WTC11 (cell line): ENCODE measurements at regions of chr2 and their contacts with region 1.

Region 1: DNA sequence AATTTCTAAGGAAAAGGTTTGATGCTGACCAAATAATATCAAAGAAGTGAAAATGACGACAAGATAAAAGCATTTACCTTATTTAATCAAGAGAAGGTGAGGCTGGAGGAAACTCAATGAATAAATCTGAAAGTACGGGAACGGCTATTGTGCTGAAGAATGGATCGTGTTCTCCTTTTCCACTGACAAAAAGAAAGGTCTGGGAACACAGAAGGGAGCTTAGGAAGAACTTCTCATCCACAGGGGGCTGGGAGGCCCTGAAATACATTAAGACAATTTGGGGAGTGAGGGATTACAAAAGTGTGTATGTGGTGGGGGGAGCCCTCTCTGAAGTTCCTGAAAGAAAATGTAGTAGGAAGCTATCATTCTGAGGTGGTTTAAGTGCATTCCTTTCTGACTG is 582.3 kb downstream of the SLC4A3 start:
- DNase-seq: no peak
- ATAC-seq: no peak
- H3K4me3 Mint-ChIP-seq: no peak overlapping the region
- H3K27ac Mint-ChIP-seq: no peak overlapping the region
- H3K4me1 Mint-ChIP-seq: peaks cover 43% of the 10 kb centered on the region
- H3K27me3 Mint-ChIP-seq: no peaks in the 10 kb centered on the region
- CTCF ChIP-seq: no peak

Region 2: DNA sequence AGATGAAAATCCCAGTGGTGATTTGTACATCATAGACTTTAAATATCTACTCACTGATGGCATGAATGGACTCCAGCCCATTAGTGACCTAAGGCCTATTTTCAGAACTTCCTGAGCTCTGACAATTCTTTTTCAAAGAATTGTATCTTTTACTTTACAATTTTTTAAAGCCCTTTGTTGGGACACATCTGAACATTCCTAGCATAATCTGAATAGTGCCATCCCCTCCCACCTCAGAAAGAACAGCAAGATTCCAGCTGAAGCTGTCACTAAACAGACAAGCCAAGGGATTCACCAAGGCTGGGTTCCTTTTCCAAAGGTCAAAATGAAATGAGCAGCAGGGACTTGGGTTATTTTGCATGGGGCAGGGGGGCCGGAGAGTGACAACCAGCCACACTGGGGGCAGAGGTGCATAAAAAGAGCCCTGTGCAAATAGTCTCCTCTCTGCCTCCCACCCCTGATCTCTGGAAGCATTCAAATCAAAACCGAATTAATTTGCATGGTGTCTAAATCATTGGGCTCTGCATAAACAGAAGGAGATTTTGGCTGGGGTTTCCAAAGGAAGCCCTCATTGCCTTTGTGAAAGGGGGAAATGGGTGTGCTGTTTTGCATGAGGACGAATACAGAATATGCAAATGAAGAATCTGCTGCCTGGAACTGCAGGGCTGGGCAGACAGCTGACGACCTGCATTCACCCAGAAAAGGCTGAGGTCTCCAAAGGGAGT is 1345.2 kb after region 1 on chr2:
- CTCF ChIA-PET with region 1: no interaction called
- POLR2A ChIA-PET with region 1: interaction called, 12 read pairs
- DNase-seq: peak; percentile 34
- ATAC-seq: peak; percentile 83
- H3K4me3 Mint-ChIP-seq: peak overlapping the region; percentile 47
- H3K27ac Mint-ChIP-seq: peak overlapping the region; percentile 94
- H3K4me1 Mint-ChIP-seq: peaks cover 58% of the 10 kb centered on the region
- H3K27me3 Mint-ChIP-seq: peaks cover 6% of the 10 kb centered on the region; the same call in 1 of the 2 replicates
- CTCF ChIP-seq: no peak